ENCODE measurements at regions of chr19 and their contacts with region 1.

Region 1: DNA sequence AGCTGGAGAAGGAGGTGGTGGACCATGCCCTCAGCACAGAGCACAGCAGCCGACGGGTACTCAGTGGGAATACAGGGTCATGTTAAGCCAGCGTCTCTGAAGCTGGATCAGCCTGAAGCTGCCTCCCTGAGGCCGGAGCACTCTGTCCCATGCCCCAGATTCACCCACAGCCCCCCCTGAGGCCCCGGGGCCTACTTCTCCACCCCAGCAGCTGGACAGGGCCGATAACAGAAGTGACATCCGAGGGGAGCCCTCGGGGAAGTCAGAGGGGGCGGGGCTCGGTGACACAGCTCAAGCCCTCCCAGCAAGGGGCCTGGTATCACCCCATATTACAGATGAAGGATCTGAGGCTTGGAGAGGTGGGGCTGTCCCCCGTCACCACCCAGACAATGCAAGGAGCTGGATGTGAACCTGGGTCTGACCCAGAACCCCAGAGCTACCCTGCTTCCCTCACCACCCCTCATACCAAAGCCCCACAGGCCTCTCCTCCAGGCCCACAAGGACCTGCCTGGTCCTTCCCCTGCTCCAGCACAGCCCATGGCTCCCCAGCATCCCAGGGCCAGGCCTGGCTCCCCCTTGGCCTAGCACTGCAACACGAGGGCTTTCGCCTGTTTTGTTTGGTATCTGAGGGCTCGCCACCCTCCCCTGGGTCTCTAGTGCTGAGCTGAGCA is 5.7 kb downstream of the R3HDM4 start:
- DNase-seq: peak; percentile 88
- H3K4me3 Mint-ChIP-seq: peak overlapping the region; percentile 41
- H3K27ac Mint-ChIP-seq: peak overlapping the region; percentile 97
- H3K4me1 Mint-ChIP-seq: peaks cover 72% of the 10 kb centered on the region
- H3K27me3 Mint-ChIP-seq: no peaks in the 10 kb centered on the region

Region 2: GRCh38 chr19:872266-872951 is 34.9 kb before region 1 on chr19:
- CTCF ChIA-PET with region 1: no interaction called
- intact Hi-C with region 1: loop called (anchors 2 kb)
- DNase-seq: peak; percentile 83
- H3K4me3 Mint-ChIP-seq: peak overlapping the region; percentile 3
- H3K27ac Mint-ChIP-seq: peak overlapping the region; percentile 61
- H3K4me1 Mint-ChIP-seq: peaks cover 8% of the 10 kb centered on the region
- H3K27me3 Mint-ChIP-seq: no peaks in the 10 kb centered on the region

Region 3: DNA sequence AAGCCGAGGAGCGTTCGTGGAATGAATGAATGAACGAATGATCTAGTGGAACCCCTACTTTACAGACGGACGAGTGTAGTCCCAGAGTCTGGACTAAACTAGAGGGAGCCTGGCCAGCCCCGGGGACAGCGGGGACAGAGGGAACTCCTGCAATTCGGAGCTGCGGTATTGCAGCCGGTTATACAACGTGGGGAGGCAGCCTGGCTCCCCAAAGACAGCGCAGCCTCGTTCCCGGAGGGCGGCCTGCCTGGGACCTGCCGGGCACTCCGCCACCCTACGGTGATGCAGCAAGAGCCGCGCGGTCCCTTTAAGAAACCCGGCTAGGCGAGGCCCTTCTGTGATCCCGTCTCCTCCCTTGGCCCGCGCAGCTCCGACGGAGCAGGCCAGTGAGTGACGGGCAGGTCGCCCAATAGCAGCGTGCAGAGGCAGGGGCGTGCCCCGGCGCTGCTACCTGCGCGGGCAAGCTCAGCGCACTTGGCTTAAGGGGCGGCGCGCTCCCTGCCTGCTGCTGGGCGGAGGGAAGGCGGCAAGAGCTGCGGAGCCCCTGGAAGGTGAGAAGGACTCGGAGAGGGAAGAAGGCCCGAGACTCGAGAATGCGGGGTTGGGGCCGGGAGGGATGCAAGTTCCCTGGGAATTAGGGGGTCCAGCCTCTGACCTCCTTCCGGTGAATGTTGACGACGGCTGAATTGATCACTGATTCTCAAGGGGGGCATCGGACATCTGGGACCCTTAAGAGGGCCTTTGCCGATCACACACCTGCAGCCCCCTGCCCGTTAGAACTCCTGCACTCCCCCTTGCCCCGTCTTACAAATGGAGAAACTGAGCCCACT is 132.5 kb after region 1 on chr19 and contains the start of gene ABCA7:
- CTCF ChIA-PET with region 1: no interaction called
- intact Hi-C with region 1: no loop called
- DNase-seq: peak; percentile 100
- H3K4me3 Mint-ChIP-seq: peak within 1 kb of the TSS; percentile 94
- H3K27ac Mint-ChIP-seq: peak within 1 kb of the TSS; percentile 65
- H3K4me1 Mint-ChIP-seq: peaks cover 41% of the 10 kb centered on the region
- H3K27me3 Mint-ChIP-seq: no peaks in the 10 kb centered on the region
- total RNA-seq, gene ABCA7: 24.4 to 30.1 TPM

Region 4: DNA sequence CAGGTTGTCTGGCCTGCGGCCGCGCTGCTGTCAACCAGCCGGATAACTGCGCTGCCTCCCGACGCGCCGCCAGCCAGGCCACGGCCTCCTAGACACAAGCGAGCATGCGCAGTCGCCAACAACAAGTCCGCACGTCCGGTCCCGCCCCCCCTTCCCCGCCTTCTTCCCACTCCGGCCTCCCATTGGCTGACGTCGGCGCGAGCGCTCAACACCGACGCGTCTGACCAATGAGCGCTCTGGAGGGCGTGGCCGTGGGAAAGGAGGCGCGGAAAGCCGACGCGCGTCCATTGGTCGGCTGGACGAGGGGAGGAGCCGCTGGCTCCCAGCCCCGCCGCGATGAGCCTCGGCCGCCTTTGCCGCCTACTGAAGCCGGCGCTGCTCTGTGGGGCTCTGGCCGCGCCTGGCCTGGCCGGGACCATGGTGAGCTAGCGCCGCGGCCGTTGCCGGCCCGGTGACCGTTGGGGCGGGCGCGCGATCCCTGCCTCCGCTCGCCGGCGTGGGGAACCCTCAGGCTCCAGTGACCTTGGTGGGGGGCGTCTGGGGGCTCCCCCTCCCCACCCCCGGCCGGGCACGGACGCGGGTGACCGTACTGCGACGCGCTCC is 196.5 kb after region 1 on chr19 and contains the start of gene GPX4:
- CTCF ChIA-PET with region 1: no interaction called
- intact Hi-C with region 1: loop called (anchors 5 kb)
- DNase-seq: peak; percentile 99
- H3K4me3 Mint-ChIP-seq: peak within 1 kb of the TSS; percentile 72
- H3K27ac Mint-ChIP-seq: peak within 1 kb of the TSS; percentile 79
- H3K4me1 Mint-ChIP-seq: peaks cover 54% of the 10 kb centered on the region
- H3K27me3 Mint-ChIP-seq: no peaks in the 10 kb centered on the region
- total RNA-seq, gene GPX4: 244 to 253 TPM

Measured in activated naive CD4-positive, alpha-beta T cell treated with anti-CD3 and anti-CD28 coated beads for 36 hours (primary cell).